Spleen (tissue), 13 donors: ENCODE measurements at regions of chr18 and their contacts with region 1.

Region 1: DNA sequence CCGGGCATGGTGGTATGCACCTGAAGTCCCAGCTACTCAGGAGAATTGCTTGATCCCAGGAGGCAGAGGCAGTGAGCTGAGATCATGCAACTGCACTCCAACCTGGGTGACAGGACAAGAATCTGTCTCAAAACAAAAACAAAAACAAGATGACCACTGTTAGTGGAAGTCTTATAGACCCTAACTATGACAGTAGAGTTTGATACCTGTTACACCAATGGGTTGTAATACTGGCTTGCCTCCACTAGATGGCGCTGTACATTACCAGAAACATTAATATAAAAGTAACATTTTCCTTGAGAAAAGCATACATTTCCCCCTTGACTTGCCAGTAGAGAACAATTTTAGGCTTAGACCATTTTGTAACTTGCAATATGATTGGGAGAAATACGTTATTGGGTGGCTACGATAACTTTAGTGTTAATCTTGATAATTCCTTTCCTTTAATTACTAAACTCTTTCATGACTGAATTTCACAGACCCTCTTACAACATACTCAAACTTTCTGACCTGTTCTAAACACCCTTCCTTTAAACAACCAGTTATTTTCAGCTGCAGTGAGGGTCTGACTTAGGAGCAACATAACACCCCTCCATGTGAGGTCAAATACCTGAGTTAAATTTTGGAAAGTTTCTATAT is 19.5 kb downstream of the SLC25A52 start:
- DNase-seq: no peak
- H3K4me3 ChIP-seq: no peak overlapping the region
- H3K27ac ChIP-seq: no peak overlapping the region
- H3K4me1 ChIP-seq: peaks cover 0 to 4% (median 0%) of the 10 kb centered on the region in 6 donors
- H3K27me3 ChIP-seq: no peaks in the 10 kb centered on the region
- CTCF ChIP-seq: peak; percentile 55 to 93 (median 85)
- POLR2A ChIP-seq: no peak

Region 2: DNA sequence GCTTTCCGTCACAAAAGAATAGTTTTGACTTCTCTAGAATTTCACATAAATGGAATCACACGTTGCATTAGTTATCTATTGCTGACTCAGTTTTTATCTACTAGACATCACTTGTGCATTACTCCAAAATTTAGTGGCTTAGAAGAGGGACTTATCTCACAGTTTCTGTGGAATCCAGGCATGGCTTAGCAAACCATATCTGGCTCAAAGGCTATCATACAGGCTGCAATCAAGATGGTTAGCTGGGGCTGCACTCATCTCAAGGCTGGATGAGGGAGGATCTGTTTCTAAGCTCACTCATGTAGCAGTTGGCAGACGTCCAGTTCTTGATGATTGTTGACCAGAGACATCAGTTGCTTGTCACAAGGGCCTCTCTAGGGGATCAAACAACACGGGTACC is 692.0 kb before region 1 on chr18:
- intact Hi-C with region 1: no loop called
- DNase-seq: no peak
- H3K4me3 ChIP-seq: no peak overlapping the region
- H3K27ac ChIP-seq: no peak overlapping the region
- H3K4me1 ChIP-seq: no peaks in the 10 kb centered on the region
- H3K27me3 ChIP-seq: peaks cover 0 to 6% (median 0%) of the 10 kb centered on the region in 7 donors
- CTCF ChIP-seq: no peak
- POLR2A ChIP-seq: no peak

Region 3: GRCh38 chr18:31977270-31977872 is 236.2 kb after region 1 on chr18:
- intact Hi-C with region 1: loop called (anchors 10 kb)
- DNase-seq: no peak
- H3K4me3 ChIP-seq: no peak overlapping the region
- H3K27ac ChIP-seq: no peak overlapping the region
- H3K4me1 ChIP-seq: no peaks in the 10 kb centered on the region
- H3K27me3 ChIP-seq: no peaks in the 10 kb centered on the region
- CTCF ChIP-seq: peak in 10 of 11 experiments; percentile 26 to 66 (median 56)
- POLR2A ChIP-seq: no peak